Panc1 (cell line): ENCODE measurements at regions of chr18 and their contacts with region 1.

Region 1: DNA sequence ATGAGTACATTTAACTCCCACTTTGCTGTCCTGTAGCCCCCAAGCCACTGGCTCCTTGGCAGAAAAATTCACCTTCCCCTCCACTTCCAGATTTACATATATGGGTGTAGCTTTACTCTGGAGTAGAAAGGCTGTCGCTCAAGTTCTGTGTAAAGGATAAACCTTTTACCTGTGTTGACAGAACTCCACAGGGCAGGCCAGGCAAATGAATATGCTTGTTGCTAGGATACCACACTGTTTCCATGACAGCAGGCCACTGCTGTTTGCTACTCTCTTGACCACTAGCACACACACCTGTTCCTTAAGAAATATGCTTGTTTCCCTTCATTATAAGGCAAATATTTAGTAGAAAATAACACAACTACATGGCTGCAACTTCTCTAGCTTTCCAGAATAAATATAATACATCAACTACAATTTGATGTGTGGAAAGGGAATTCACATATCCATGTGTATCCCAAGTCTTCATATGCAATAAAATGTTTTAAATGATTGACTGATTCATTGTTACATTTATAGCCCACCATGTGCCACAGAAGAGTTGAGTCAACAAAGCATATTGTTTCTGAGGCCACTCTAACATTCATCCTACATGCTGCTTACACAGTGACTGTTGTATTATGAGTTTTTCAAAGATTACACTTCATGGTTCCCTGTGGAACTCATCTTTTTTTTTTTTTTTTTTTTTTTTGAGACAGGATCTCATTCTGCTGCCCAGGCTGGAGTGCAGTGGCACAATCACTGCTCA is 56.2 kb upstream of the ROCK1 start:
- DNase-seq: no peak
- ATAC-seq: no peak
- H3K4me3 ChIP-seq: no peak overlapping the region
- H3K27ac ChIP-seq: no peak overlapping the region
- H3K4me1 ChIP-seq: no peaks in the 10 kb centered on the region
- H3K27me3 ChIP-seq: no peaks in the 10 kb centered on the region
- CTCF ChIP-seq: no peak

Region 2: GRCh38 chr18:21629089-21629832 is 461.5 kb after region 1 on chr18:
- CTCF ChIA-PET with region 1: no interaction called
- POLR2A ChIA-PET with region 1: interaction called, 16 read pairs
- in situ Hi-C with region 1: no loop called
- intact Hi-C with region 1: no loop called
- DNase-seq: no peak
- ATAC-seq: no peak
- H3K4me3 ChIP-seq: no peak overlapping the region
- H3K27ac ChIP-seq: no peak overlapping the region
- H3K4me1 ChIP-seq: no peaks in the 10 kb centered on the region
- H3K27me3 ChIP-seq: no peaks in the 10 kb centered on the region
- CTCF ChIP-seq: no peak